Activated naive CD4-positive, alpha-beta T cell treated with anti-CD3 and anti-CD28 coated beads for 36 hours (primary cell): ENCODE measurements at regions of chr5 and their contacts with region 1.

Region 1: GRCh38 chr5:82356808-82357671 is 78.9 kb upstream of the RPS23 start:
- DNase-seq: peak; percentile 91
- H3K4me3 Mint-ChIP-seq: peak overlapping the region; percentile 54
- H3K27ac Mint-ChIP-seq: peak overlapping the region; percentile 97
- H3K4me1 Mint-ChIP-seq: peaks cover 50% of the 10 kb centered on the region
- H3K27me3 Mint-ChIP-seq: no peaks in the 10 kb centered on the region

Region 2: DNA sequence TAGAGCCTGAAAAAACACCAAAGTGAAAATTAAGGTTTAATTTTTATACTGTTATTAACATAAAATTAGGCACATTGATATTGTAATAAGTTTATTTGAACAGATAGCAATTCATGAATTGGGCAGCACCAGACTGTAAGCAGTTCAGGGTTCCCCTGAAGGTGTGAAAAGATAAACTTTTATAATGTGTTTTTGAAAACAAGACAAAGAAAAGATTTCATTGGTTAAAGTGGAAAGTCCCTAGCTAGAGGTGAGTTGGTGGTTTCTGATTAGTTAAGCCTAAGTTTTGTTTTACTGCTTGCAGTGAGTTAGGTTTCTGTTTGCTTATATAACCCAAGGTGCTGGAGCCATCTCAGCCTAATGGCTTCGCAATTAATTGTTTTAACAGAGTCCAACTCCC is 17.6 kb after region 1 on chr5:
- CTCF ChIA-PET with region 1: interaction called, 6 read pairs
- intact Hi-C with region 1: loop called (anchors 1 kb)
- DNase-seq: no peak
- H3K4me3 Mint-ChIP-seq: no peak overlapping the region
- H3K27ac Mint-ChIP-seq: peak overlapping the region; percentile 50
- H3K4me1 Mint-ChIP-seq: peaks cover 17% of the 10 kb centered on the region
- H3K27me3 Mint-ChIP-seq: no peaks in the 10 kb centered on the region

Region 3: DNA sequence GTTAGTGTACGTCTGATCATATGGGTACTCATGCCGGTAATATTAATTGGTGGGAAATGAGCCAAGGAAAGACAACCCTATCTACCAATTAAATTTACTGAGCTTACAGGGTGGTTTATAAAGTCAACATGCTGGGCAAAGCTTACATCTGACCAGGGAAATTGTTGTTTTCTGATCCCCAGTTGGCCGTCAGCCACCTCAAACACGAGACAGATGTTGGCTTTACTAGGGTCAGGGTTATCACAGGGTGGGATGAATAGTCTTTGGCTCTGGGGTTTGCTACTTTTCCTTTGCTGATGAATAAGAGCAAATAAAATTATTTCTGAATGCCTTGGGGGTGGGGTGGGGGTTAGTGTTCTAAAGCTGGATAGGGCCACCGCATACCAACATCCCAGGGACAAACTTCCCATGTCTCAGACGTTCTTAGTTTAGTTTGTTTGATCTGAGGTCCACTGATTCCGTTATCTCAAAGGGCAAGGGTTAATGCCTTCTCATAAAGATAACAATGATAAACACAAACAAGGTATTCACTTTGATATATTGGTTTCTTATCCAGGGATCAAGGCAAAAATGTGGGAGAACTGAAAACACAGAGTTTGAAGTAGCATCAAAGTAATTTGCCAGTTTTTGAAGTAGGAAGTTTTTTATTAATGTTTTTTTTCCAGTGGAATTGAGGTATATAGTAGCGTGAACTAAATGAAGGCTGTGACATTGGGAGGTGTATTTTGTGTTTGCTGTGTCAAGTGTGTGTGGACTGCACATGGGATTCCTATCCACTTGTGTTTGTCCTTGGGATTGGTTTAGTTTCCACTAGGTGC is 30.2 kb after region 1 on chr5:
- CTCF ChIA-PET with region 1: interaction called, 4 read pairs
- intact Hi-C with region 1: loop called (anchors 1 kb)
- DNase-seq: no peak
- H3K4me3 Mint-ChIP-seq: no peak overlapping the region
- H3K27ac Mint-ChIP-seq: no peak overlapping the region
- H3K4me1 Mint-ChIP-seq: peaks cover 11% of the 10 kb centered on the region
- H3K27me3 Mint-ChIP-seq: peaks cover 4% of the 10 kb centered on the region

Region 4: DNA sequence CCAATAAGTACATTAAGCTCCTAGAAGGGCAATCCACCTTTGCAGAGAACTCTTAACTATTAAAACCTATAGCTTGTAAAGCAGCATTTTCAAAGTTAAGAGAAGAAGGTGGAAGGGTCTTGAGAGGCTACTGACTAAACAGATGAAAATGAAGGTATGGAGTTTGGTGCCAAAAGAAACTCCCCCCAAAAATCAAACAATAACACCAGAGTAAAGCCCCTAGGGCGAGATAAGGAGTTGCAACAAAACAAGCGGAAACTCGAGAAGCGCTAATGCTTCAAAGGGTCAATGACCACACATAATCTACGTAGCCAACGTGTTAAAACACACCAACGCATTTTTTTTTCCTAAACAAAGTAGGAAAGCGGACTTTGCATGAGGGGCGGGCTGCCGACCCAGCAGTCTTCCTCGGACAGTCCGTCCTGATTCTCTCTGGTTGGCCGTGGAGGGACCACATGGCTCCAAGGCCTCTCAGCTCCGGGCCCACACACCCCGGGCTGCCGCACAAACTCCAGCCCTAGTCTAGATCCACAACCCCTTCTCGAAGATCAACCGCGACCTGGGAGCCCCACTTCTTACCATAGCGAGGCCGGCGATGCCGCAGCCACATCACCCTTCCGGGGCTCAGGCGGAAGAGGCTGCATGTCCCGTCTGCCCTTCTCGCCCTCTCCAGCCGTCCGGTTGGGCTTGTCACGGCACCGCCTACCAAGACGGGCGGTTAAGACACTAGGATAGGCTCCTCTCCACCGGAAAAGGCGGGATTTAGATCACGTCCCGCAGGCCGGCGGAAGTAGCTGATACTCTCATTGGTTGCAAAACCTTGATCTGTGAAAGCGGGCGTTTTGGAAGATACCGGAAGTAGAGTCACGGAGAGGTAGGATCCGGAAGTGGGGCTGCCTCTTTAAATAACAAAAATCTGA is 720.0 kb after region 1 on chr5 and contains the starts of genes TMEM167A and XRCC4:
- CTCF ChIA-PET with region 1: no interaction called
- intact Hi-C with region 1: loop called (anchors 2 kb)
- DNase-seq: peak; percentile 95
- H3K4me3 Mint-ChIP-seq: peak within 1 kb of the TSS; percentile 98
- H3K27ac Mint-ChIP-seq: peak within 1 kb of the TSS; percentile 96
- H3K4me1 Mint-ChIP-seq: peaks cover 48% of the 10 kb centered on the region
- H3K27me3 Mint-ChIP-seq: no peaks in the 10 kb centered on the region
- total RNA-seq, gene TMEM167A: 58.8 to 64.4 TPM
- total RNA-seq, gene XRCC4: 12.1 to 12.8 TPM